ENCODE measurements at regions of chr20 and their contacts with region 1.

Region 1: GRCh38 chr20:31605031-31605901 is at the start of gene ID1:
- DNase-seq: peak; percentile 99
- ATAC-seq: peak; percentile 58
- H3K4me3 ChIP-seq: peak within 1 kb of the TSS; percentile 81 to 99 (median 95)
- H3K27ac ChIP-seq: peak within 1 kb of the TSS; percentile 98
- H3K4me1 ChIP-seq: peaks cover 53% of the 10 kb centered on the region
- H3K27me3 ChIP-seq: no peaks in the 10 kb centered on the region; a peak in 1 of 5 replicates
- CTCF ChIP-seq: peak; percentile 8; the same call in 1 of the 2 replicates
- EP300 ChIP-seq: peak in 1 of 2 experiments; percentile 59; a peak in 2 of 4 replicates
- POLR2A ChIP-seq: peak in 1 of 2 experiments; percentile 100; a peak in 2 of 4 replicates
- RAD21 ChIP-seq: peak; percentile 60
- total RNA-seq, gene ID1: 315 and 419 TPM in 2 replicates

Region 2: GRCh38 chr20:31452575-31452974 is 152.7 kb before region 1 on chr20:
- CTCF ChIA-PET with region 1: no interaction called
- POLR2A ChIA-PET with region 1: no interaction called
- in situ Hi-C with region 1: no loop called
- intact Hi-C with region 1: no loop called
- DNase-seq: no peak
- ATAC-seq: no peak
- H3K4me3 ChIP-seq: no peak overlapping the region
- H3K27ac ChIP-seq: no peak overlapping the region
- H3K4me1 ChIP-seq: peaks cover 16% of the 10 kb centered on the region
- H3K27me3 ChIP-seq: no peaks in the 10 kb centered on the region; a peak in 1 of 5 replicates
- CTCF ChIP-seq: no peak
- EP300 ChIP-seq: no peak
- POLR2A ChIP-seq: no peak
- RAD21 ChIP-seq: no peak

Region 3: GRCh38 chr20:31560094-31560899 is 45.0 kb before region 1 on chr20:
- CTCF ChIA-PET with region 1: interaction called, 454 read pairs
- POLR2A ChIA-PET with region 1: interaction called, 1,427 read pairs
- in situ Hi-C with region 1: loop called (anchors 5 kb)
- intact Hi-C with region 1: no loop called
- DNase-seq: peak; percentile 83
- ATAC-seq: peak; percentile 51
- H3K4me3 ChIP-seq: no peak overlapping the region
- H3K27ac ChIP-seq: peak overlapping the region; percentile 65
- H3K4me1 ChIP-seq: peaks cover 31% of the 10 kb centered on the region
- H3K27me3 ChIP-seq: no peaks in the 10 kb centered on the region
- CTCF ChIP-seq: peak; percentile 95
- EP300 ChIP-seq: peak in 1 of 2 experiments; percentile 33; a peak in 1 of 4 replicates
- POLR2A ChIP-seq: no peak
- RAD21 ChIP-seq: peak; percentile 85

Region 4: GRCh38 chr20:31587545-31588389 is 17.5 kb before region 1 on chr20:
- CTCF ChIA-PET with region 1: no interaction called
- POLR2A ChIA-PET with region 1: interaction called, 362 read pairs
- in situ Hi-C with region 1: no loop called
- intact Hi-C with region 1: no loop called
- DNase-seq: no peak
- ATAC-seq: peak; percentile 78
- H3K4me3 ChIP-seq: peak overlapping the region; percentile 68 to 86 (median 84)
- H3K27ac ChIP-seq: peak overlapping the region; percentile 50
- H3K4me1 ChIP-seq: peaks cover 47% of the 10 kb centered on the region
- H3K27me3 ChIP-seq: no peaks in the 10 kb centered on the region
- CTCF ChIP-seq: no peak
- EP300 ChIP-seq: no peak
- POLR2A ChIP-seq: 0 out of 4 replicates have a peak, but pooled peaks of 1 of the 2 experiments have one; percentile 26
- RAD21 ChIP-seq: 0 out of 2 replicates have a peak, but pooled peaks have one; percentile 58

Region 5: DNA sequence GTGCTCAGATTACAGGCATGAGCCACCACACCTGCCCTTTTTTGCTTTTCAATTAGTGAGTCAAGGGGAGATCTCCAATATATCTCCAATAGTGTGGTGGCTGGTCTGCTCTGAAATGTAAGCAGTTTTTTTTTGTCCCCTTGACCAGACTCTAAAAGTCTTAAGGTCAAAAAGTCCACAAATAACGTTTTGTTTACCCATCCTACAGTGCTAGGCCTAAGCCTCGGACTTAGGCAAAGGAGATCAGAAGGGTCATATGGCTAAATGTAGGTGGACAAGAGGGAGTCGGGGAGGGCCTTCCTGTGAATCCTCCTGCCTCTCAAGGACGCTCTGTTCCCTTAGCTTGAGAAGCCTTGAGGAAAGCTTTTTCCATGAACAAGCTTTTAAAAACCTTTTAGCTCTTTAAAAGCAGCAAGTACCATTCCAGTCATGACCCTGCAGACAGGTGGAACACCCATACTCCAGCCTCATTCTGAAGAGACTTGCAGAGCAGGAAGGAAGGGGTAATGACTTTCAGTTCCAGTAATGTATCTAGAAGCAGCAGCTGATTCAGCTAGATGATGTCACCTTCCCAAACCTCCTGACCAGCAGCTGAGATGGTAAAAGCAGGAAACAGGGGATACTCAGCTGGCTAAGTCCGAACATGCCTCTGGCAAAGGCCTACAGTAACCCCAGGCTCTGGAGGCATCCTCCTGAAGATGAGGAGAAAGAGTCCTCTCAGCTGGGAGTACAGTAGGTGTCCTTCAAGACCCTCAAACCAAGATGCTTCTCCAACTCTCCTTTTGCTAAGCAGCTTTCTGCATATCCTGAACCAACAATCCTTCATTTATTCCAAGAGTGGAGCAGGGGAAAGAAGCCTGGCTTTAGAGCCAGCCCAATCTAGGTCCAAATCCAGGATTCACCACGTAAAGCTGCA is 93.8 kb after region 1 on chr20:
- CTCF ChIA-PET with region 1: no interaction called
- POLR2A ChIA-PET with region 1: interaction called, 38 read pairs
- in situ Hi-C with region 1: no loop called
- intact Hi-C with region 1: no loop called
- DNase-seq: peak; percentile 76
- ATAC-seq: peak; percentile 15
- H3K4me3 ChIP-seq: no peak overlapping the region
- H3K27ac ChIP-seq: peak overlapping the region; percentile 83
- H3K4me1 ChIP-seq: peaks cover 100% of the 10 kb centered on the region
- H3K27me3 ChIP-seq: no peaks in the 10 kb centered on the region
- CTCF ChIP-seq: no peak
- EP300 ChIP-seq: peak in 1 of 2 experiments; percentile 71; a peak in 2 of 4 replicates
- POLR2A ChIP-seq: peak in 1 of 2 experiments; percentile 33; a peak in 1 of 4 replicates
- RAD21 ChIP-seq: no peak

Region 6: GRCh38 chr20:31712564-31713311 is 107.5 kb after region 1 on chr20:
- CTCF ChIA-PET with region 1: no interaction called
- POLR2A ChIA-PET with region 1: interaction called, 22 read pairs
- in situ Hi-C with region 1: no loop called
- intact Hi-C with region 1: no loop called
- DNase-seq: peak; percentile 95
- ATAC-seq: peak; percentile 61
- H3K4me3 ChIP-seq: peak overlapping the region in 2 of 3 experiments; percentile 2 to 29; a peak in 2 of 6 replicates
- H3K27ac ChIP-seq: peak overlapping the region; percentile 61
- H3K4me1 ChIP-seq: peaks cover 99% of the 10 kb centered on the region
- H3K27me3 ChIP-seq: no peaks in the 10 kb centered on the region
- CTCF ChIP-seq: no peak
- EP300 ChIP-seq: peak in 1 of 2 experiments; percentile 92; a peak in 3 of 4 replicates
- POLR2A ChIP-seq: peak in 1 of 2 experiments; percentile 39; a peak in 1 of 4 replicates
- RAD21 ChIP-seq: no peak

Measured in HepG2 (cell line).